ENCODE measurements at regions of chr10 and their contacts with region 1.

Region 1: GRCh38 chr10:109883859-109884771 is 39.2 kb downstream of the XPNPEP1 start:
- DNase-seq: peak; percentile 40
- ATAC-seq: peak; percentile 88
- H3K4me3 Mint-ChIP-seq: no peak overlapping the region
- H3K27ac Mint-ChIP-seq: no peak overlapping the region
- H3K4me1 Mint-ChIP-seq: peaks cover 12% of the 10 kb centered on the region
- H3K27me3 Mint-ChIP-seq: no peaks in the 10 kb centered on the region
- CTCF ChIP-seq: peak; percentile 95

Region 2: DNA sequence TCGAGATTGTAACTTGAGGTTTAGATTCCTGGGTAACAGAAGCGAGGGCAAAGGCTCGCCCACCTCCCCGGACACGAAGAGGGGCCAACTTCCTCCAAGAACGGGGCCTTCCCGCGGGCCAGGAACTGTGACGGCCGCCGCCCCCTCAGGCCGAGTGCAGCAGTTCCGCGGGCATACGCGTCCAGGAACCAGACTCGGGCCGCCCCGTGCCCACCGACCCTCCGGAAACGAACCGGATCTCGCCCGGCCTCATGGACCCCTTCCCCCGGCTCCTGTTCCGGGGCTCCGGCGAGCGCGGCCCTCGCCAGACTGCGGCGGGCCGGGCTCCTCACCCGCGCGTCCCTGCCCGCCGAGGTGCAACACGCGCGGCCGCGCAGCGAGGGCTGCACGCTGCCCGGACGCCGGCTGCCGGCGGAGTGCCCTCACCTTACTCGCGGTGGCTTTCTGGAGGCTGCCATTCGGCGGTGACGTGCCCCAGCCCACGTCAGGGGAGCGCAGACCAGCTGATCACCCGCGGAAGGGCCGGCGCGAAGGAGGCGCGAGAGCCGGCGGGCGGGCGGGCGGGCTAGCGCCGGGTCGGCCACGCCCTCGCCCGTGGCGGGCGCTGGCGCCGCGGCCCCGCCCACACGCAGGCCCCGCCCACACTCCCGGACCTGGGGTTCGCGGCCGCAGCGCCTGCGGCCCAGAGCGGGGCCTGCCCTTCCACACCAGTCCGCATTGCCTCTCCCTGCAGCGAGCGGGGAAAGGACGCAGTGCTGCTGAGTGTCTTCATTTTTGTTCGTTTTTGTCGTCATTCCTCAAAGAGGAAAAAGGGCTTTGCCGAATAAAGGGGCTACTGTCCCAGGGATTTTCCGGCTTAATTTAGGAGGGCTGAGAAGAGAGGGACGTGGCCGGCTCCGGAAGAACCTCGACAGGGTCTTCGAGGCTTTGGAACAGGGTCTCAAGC is 39.1 kb after region 1 on chr10 and contains the start of gene XPNPEP1:
- CTCF ChIA-PET with region 1: interaction called, 4 read pairs
- POLR2A ChIA-PET with region 1: interaction called, 3 read pairs
- intact Hi-C with region 1: loop called (anchors 2 kb)
- DNase-seq: peak; percentile 85
- ATAC-seq: peak; percentile 94
- H3K4me3 Mint-ChIP-seq: peak within 1 kb of the TSS; percentile 88
- H3K27ac Mint-ChIP-seq: peak within 1 kb of the TSS; percentile 81
- H3K4me1 Mint-ChIP-seq: peaks cover 36% of the 10 kb centered on the region
- H3K27me3 Mint-ChIP-seq: peaks cover 2% of the 10 kb centered on the region
- CTCF ChIP-seq: no peak
- total RNA-seq, gene XPNPEP1: 53.5 and 70.6 TPM in 2 replicates

Region 3: DNA sequence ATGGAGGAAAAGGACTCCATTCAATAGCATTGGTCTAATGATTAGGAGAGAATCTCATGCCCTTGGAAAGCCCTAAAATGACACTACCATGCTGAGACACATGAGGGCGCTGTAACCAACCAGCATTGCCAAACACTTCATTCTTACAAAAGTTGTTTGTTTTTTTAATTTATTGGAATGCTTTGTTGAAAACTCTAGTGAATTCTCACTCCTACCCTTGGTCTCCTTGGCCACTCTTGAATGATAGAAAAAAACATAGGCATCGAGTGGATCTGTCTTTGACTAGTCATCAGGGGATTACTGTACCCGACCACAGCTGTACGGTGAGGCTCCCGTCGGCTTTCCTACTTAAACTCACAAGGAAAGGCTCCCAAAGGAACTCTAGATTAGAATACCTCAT is 94.4 kb after region 1 on chr10:
- CTCF ChIA-PET with region 1: interaction called, 5 read pairs
- POLR2A ChIA-PET with region 1: no interaction called
- intact Hi-C with region 1: loop called (anchors 1 kb)
- DNase-seq: no peak
- ATAC-seq: peak; percentile 42
- H3K4me3 Mint-ChIP-seq: no peak overlapping the region
- H3K27ac Mint-ChIP-seq: no peak overlapping the region
- H3K4me1 Mint-ChIP-seq: no peaks in the 10 kb centered on the region
- H3K27me3 Mint-ChIP-seq: no peaks in the 10 kb centered on the region
- CTCF ChIP-seq: peak; percentile 19

Region 4: DNA sequence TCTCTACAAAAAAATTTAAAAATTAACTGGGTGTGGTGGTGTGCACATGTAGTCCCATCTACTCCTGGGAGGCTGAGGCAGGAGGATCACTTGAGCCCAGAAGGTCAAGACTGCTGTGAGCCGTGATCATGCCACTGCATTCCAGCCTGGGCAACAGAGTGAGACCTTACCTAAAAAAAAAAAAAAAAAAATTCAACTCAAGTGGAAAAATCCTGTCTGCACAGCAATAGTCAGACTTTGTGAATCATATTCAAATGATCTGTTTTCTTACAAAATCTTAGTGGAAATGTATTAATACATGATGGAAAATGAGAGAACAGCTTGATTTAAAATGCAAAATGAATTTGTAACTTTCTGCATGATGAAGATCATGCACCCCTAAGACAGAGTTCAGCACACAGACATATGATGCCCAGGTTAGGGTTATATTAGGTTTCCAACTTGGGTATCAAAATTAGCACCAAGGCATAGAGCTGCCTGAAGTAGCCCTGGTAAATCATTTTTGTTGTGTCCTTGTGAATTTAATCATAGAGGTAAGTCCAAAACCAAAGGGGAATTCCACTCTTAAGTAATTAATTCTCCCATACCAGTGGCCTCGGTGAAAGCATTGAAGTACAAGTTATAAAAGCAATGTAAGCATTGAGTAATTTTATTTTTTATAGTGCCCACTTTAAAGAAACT is 217.5 kb after region 1 on chr10:
- CTCF ChIA-PET with region 1: interaction called, 7 read pairs
- POLR2A ChIA-PET with region 1: no interaction called
- intact Hi-C with region 1: loop called (anchors 1 kb)
- DNase-seq: no peak
- ATAC-seq: peak; percentile 55
- H3K4me3 Mint-ChIP-seq: no peak overlapping the region
- H3K27ac Mint-ChIP-seq: peak overlapping the region; percentile 74
- H3K4me1 Mint-ChIP-seq: peaks cover 42% of the 10 kb centered on the region
- H3K27me3 Mint-ChIP-seq: no peaks in the 10 kb centered on the region
- CTCF ChIP-seq: no peak

Region 5: DNA sequence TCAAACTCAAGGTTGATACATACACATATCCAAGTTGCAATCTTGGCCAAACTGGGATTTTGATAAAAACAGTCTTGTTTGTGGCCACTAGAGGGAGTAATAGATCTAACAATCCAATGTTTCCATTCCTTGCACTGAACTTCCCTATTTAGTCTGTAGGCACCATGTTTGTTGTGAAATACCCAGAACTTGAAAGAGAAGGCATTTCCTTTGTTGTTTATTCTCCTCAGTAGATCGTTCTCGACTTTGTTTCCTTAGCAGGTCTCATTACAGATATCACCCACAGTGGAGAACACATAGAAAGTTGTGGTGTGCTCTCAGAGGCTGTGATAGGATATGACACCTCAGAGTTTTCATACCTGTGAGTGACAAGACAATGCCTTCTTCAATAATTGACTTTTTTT is 253.0 kb after region 1 on chr10:
- CTCF ChIA-PET with region 1: interaction called, 17 read pairs
- POLR2A ChIA-PET with region 1: no interaction called
- intact Hi-C with region 1: loop called (anchors 1 kb)
- DNase-seq: no peak
- ATAC-seq: peak; percentile 66
- H3K4me3 Mint-ChIP-seq: no peak overlapping the region
- H3K27ac Mint-ChIP-seq: peak overlapping the region; percentile 68
- H3K4me1 Mint-ChIP-seq: peaks cover 35% of the 10 kb centered on the region
- H3K27me3 Mint-ChIP-seq: no peaks in the 10 kb centered on the region
- CTCF ChIP-seq: no peak

Region 6: GRCh38 chr10:110279407-110279986 is 395.4 kb after region 1 on chr10:
- CTCF ChIA-PET with region 1: interaction called, 43 read pairs
- POLR2A ChIA-PET with region 1: no interaction called
- intact Hi-C with region 1: loop called (anchors 1 kb)
- DNase-seq: no peak
- ATAC-seq: peak; percentile 68
- H3K4me3 Mint-ChIP-seq: peak overlapping the region; percentile 38
- H3K27ac Mint-ChIP-seq: no peak overlapping the region
- H3K4me1 Mint-ChIP-seq: peaks cover 24% of the 10 kb centered on the region
- H3K27me3 Mint-ChIP-seq: no peaks in the 10 kb centered on the region
- CTCF ChIP-seq: peak; percentile 92